ENCODE measurements at regions of chr19 and their contacts with region 1.

Region 1: DNA sequence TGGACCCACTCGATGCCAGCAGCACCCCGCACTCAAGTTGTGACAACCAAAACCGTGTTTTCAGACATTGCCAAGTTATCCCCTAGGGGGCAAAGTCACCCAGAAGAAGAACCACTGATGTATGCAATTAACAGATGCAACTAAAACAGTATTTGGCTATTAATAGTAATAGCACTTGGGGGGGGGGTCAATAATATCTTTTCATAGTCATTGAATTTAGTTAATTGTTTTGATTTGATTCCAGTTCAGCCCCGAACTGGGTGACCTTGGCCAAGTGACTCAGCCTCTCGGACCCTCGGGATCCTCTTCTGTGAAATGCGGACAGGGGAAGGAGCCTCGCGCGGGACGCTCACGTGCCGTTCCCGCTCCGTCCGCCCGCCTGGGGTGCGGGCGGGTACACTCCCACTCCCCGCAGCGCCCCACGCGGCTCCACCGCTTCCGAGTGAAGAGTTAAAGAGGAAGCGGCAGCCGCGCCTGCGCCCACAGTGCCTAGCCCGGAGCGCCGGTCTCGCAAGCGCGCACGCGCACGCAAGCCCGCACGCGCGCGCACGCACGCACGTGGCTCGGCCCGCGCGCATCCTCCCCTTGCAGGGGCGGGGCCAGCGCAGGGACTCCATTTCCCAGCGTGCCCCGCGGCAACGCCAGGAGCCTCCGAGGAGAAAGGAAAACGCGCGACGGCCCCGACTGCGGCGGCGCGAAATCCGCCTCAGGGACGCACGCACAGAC is 449 bp upstream of the DAZAP1 start:
- DNase-seq: peak; percentile 99
- ATAC-seq: peak; percentile 83
- H3K4me3 Mint-ChIP-seq: peak overlapping the region; percentile 65
- H3K27ac Mint-ChIP-seq: peak overlapping the region; percentile 72
- H3K4me1 Mint-ChIP-seq: peaks cover 43% of the 10 kb centered on the region
- H3K27me3 Mint-ChIP-seq: peaks cover 2% of the 10 kb centered on the region

Region 2: GRCh38 chr19:633068-633785 is 773.7 kb before region 1 on chr19 and contains the start of gene POLRMT:
- CTCF ChIA-PET with region 1: no interaction called
- POLR2A ChIA-PET with region 1: no interaction called
- intact Hi-C with region 1: loop called in 1 of 2 experiments (anchors 1 kb)
- DNase-seq: peak; percentile 98
- ATAC-seq: peak; percentile 98
- H3K4me3 Mint-ChIP-seq: peak within 1 kb of the TSS; percentile 97
- H3K27ac Mint-ChIP-seq: peak within 1 kb of the TSS; percentile 91
- H3K4me1 Mint-ChIP-seq: peaks cover 29% of the 10 kb centered on the region
- H3K27me3 Mint-ChIP-seq: no peaks in the 10 kb centered on the region
- total RNA-seq, gene POLRMT: 69.0 to 77.4 TPM

Region 3: GRCh38 chr19:1249298-1249989 is 157.5 kb before region 1 on chr19:
- CTCF ChIA-PET with region 1: no interaction called
- POLR2A ChIA-PET with region 1: interaction called, 3 read pairs
- intact Hi-C with region 1: loop called in 1 of 2 experiments (anchors 1 kb)
- DNase-seq: peak; percentile 97
- ATAC-seq: peak; percentile 53
- H3K4me3 Mint-ChIP-seq: peak overlapping the region; percentile 73
- H3K27ac Mint-ChIP-seq: no peak overlapping the region
- H3K4me1 Mint-ChIP-seq: peaks cover 9% of the 10 kb centered on the region
- H3K27me3 Mint-ChIP-seq: no peaks in the 10 kb centered on the region

Region 4: DNA sequence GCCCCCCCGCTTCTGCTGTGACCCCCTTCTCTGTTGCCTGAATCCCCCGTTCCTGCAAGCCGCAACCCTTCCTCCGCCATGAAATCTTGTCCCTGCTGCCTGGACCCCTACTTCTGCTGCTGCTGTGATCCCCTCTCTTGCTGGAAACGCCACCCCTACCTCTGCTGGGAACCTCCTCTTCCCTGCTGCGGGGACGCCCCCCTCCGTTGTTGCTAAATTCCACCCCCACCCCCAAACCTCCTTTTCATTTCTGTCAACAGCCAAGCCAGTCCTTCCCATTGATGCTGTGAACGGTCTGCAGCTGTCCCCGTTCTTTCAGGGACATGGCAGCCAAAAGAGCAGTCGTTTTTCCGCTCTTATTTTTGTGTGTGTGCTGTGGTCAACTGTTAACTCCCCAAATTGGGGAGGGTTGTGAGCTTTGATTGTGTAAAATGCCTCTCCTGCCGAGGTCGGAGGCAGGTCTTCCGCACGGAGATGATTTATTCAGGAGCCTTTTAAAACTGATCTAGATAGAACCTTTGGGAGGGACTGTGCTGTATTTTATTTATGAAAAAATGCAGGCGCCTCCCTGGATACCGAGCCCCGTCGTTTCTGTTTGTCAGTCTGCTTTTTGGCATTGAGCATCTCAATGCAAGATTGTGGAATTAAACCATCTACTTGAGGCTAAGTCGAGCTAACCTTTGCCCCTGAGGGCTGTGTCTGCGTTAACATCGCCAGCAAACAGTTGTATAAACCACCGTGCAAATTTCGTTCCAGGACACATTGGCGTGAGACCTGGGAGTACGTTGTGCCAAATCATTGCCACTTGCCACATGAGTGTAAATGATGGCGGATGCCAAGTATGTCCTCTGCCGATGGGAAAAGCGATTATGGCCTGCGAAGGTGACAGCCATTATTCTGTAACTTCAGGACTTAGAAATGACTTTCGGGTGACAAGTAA is 51.1 kb before region 1 on chr19:
- CTCF ChIA-PET with region 1: no interaction called
- POLR2A ChIA-PET with region 1: no interaction called
- intact Hi-C with region 1: loop called in 1 of 2 experiments (anchors 1 kb)
- DNase-seq: peak; percentile 51
- ATAC-seq: no peak
- H3K4me3 Mint-ChIP-seq: peak overlapping the region; percentile 77
- H3K27ac Mint-ChIP-seq: peak overlapping the region; percentile 49
- H3K4me1 Mint-ChIP-seq: peaks cover 9% of the 10 kb centered on the region
- H3K27me3 Mint-ChIP-seq: no peaks in the 10 kb centered on the region

Region 5: DNA sequence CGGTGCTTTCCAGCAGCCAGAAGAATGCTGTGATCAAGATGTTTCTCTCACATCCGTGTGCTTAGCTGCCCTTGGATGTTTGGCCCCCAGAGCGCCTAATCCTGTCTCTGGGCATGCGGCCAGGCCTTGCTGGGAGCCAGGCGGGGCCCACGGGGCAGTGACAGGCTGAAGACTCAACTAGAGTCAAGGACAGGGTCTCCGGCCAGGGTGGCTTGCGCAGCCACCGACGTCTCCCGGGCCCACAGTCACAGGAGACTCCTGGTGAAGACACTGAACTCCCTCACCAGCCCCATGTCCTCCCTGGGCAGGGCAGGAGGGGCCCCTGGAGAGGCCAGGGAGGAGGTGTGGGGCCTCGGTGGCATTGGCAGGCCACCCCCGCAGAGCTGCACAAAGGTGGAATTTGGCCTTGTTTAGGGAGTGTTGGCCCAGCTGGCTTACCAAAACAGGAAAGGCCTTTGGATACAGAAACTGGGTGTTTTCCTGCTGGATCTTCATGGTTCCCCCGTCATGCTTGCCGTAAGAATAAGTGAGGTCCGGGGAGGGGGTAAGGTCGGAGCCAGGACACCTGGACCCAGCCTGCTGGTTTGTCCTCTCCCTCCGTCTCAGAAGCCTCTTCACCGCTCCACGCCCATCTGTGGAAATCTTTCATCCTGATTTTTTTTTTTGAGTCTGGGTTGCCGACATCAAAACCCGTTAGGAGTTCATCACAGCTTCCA is 33.2 kb before region 1 on chr19:
- CTCF ChIA-PET with region 1: no interaction called
- POLR2A ChIA-PET with region 1: no interaction called
- intact Hi-C with region 1: no loop called
- DNase-seq: no peak
- ATAC-seq: no peak
- H3K4me3 Mint-ChIP-seq: no peak overlapping the region
- H3K27ac Mint-ChIP-seq: no peak overlapping the region
- H3K4me1 Mint-ChIP-seq: no peaks in the 10 kb centered on the region
- H3K27me3 Mint-ChIP-seq: no peaks in the 10 kb centered on the region

Region 6: DNA sequence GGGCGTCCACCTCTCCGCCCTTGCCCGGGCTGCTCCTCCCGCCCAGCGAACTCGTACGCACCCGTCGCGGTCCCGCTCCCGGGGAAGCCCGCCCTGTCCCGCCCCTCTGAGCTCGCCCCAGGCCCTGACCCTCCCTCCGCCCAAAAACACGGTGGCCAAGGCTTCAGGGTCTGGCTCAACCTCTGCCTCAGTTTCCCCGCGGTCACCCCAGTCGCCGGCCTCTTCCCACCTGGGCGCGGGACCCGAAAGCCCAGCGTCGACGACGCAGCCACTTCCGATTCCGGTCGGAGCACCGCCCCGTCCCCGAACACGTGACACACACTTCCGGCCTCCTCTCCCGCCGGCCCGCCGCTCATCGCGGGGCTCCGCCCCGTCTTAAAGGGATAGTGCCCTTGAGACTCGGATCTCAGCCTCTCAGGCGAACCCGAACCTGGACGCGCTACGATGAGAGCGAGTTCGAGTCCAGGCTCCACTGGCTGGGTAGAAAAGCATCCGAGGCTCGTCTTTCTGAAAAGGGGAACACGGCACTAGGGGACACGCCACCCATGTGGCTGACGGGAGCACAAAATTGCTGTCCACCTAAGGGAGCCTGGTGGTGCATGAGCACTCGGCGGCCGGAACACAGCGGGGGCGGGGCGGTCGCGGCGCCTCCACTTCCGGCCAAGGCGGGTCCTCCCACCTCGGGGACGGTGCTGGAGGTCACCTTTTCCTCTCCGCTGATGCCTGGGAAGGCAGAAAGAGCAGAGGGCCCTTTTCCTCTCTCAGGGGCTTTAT is 72.2 kb after region 1 on chr19 and contains the start of gene C19orf25:
- CTCF ChIA-PET with region 1: no interaction called
- POLR2A ChIA-PET with region 1: no interaction called
- intact Hi-C with region 1: loop called in 1 of 2 experiments (anchors 1 kb)
- DNase-seq: peak; percentile 97
- ATAC-seq: peak; percentile 98
- H3K4me3 Mint-ChIP-seq: peak within 1 kb of the TSS; percentile 96
- H3K27ac Mint-ChIP-seq: peak within 1 kb of the TSS; percentile 95
- H3K4me1 Mint-ChIP-seq: peaks cover 6% of the 10 kb centered on the region
- H3K27me3 Mint-ChIP-seq: no peaks in the 10 kb centered on the region
- total RNA-seq, gene C19orf25: 19.9 to 26.9 TPM

Region 7: GRCh38 chr19:1605236-1606137 is 198.6 kb after region 1 on chr19 and contains the start of gene UQCR11:
- CTCF ChIA-PET with region 1: no interaction called
- POLR2A ChIA-PET with region 1: no interaction called
- intact Hi-C with region 1: loop called in 1 of 2 experiments (anchors 1 kb)
- DNase-seq: peak; percentile 96
- ATAC-seq: peak; percentile 89
- H3K4me3 Mint-ChIP-seq: peak within 1 kb of the TSS; percentile 97
- H3K27ac Mint-ChIP-seq: peak within 1 kb of the TSS; percentile 99
- H3K4me1 Mint-ChIP-seq: peaks cover 52% of the 10 kb centered on the region
- H3K27me3 Mint-ChIP-seq: no peaks in the 10 kb centered on the region
- total RNA-seq, gene UQCR11: 152 to 226 TPM

Region 8: GRCh38 chr19:1863726-1864480 is 457.0 kb after region 1 on chr19:
- CTCF ChIA-PET with region 1: no interaction called
- POLR2A ChIA-PET with region 1: no interaction called
- intact Hi-C with region 1: loop called in 1 of 2 experiments (anchors 1 kb)
- DNase-seq: peak; percentile 97
- ATAC-seq: peak; percentile 75
- H3K4me3 Mint-ChIP-seq: peak overlapping the region; percentile 68
- H3K27ac Mint-ChIP-seq: peak overlapping the region; percentile 72
- H3K4me1 Mint-ChIP-seq: peaks cover 37% of the 10 kb centered on the region
- H3K27me3 Mint-ChIP-seq: no peaks in the 10 kb centered on the region

Measured in activated CD4-positive, alpha-beta T cell treated with anti-CD3 and anti-CD28 coated beads for 36 hours (primary cell).